Naive thymus-derived CD4-positive, alpha-beta T cell (primary cell): ENCODE measurements at regions of chr10 and their contacts with region 1.

Region 1: DNA sequence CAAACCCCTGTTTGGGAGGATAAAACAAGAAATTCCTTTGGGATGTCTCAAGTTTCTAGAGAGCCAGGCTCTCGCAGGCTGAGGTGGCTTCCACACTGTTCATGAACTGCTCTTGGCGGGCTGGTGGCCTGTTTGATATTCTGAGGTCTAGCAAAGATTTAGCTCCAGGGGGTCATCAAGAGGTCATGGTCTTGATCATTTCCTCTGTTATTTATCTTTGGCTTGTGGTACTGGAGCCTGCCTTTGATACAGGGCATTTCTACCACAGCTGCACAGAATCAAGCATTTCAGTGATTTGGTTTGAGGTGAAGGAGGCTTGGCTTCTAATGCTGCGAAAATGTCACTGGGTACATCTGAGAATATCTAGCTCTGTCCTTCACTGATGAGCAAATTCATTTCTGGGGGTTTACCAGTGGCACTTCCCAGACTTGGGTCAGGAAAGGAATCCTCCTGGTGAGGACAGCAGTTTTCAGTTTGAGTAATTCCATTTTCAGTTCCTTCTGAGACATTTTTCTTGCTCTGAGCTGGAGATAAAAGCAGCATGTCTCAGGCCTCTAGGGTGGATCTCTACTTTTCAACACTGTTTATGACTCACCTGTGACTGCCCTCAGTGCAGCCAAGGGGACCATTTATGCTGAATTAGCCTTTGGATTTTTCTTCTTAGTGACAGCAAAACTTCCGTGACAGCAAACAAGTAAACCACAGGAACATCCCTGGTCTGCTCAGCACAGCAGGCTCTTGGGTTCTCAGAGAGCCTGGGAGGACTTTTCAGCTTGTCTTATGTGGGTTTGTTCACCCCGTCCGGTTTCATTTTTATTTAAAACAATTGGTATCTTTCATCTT is 312.0 kb downstream of the RNLS start:
- DNase-seq: peak in 7 of 9 donors; percentile 8 to 54 (median 26)
- ATAC-seq: peak; percentile 79
- H3K4me3 ChIP-seq: peak overlapping the region; percentile 12
- H3K4me3 Mint-ChIP-seq: peak overlapping the region; percentile 29 to 78 (median 66)
- H3K27ac ChIP-seq: peak overlapping the region; percentile 33
- H3K27ac Mint-ChIP-seq: peak overlapping the region; percentile 44 to 89 (median 83)
- H3K4me1 ChIP-seq: peaks cover 13 to 18% of the 10 kb centered on the region in 2 donors
- H3K4me1 Mint-ChIP-seq: peaks cover 23 to 65% (median 38%) of the 10 kb centered on the region in 7 donors
- H3K27me3 ChIP-seq: no peaks in the 10 kb centered on the region
- H3K27me3 Mint-ChIP-seq: peaks cover 0 to 8% (median 0%) of the 10 kb centered on the region in 5 donors

Region 2: GRCh38 chr10:88194041-88194887 is 76.8 kb before region 1 on chr10:
- CTCF ChIA-PET with region 1: no interaction called
- POLR2A ChIA-PET with region 1: no interaction called
- intact Hi-C with region 1: loop called (anchors 1 to 2 kb)
- DNase-seq: peak in 8 of 9 donors; percentile 24 to 83 (median 72)
- ATAC-seq: peak; percentile 98
- H3K4me3 ChIP-seq: peak overlapping the region; percentile 9
- H3K4me3 Mint-ChIP-seq: peak overlapping the region; percentile 61 to 80 (median 72)
- H3K27ac ChIP-seq: peak overlapping the region; percentile 53
- H3K27ac Mint-ChIP-seq: peak overlapping the region; percentile 72 to 94 (median 89)
- H3K4me1 ChIP-seq: peaks cover 32% of the 10 kb centered on the region in 2 donors
- H3K4me1 Mint-ChIP-seq: peaks cover 21 to 71% (median 52%) of the 10 kb centered on the region in 7 donors
- H3K27me3 ChIP-seq: no peaks in the 10 kb centered on the region
- H3K27me3 Mint-ChIP-seq: peaks cover 0 to 2% (median 0%) of the 10 kb centered on the region in 5 donors

Region 3: GRCh38 chr10:88260329-88261051 is 10.6 kb before region 1 on chr10:
- CTCF ChIA-PET with region 1: no interaction called
- POLR2A ChIA-PET with region 1: no interaction called
- intact Hi-C with region 1: loop called in 1 of 2 experiments (anchors 1 kb)
- DNase-seq: no peak
- ATAC-seq: no peak
- H3K4me3 ChIP-seq: no peak overlapping the region
- H3K4me3 Mint-ChIP-seq: no peak overlapping the region
- H3K27ac ChIP-seq: no peak overlapping the region
- H3K27ac Mint-ChIP-seq: no peak overlapping the region
- H3K4me1 ChIP-seq: no peaks in the 10 kb centered on the region
- H3K4me1 Mint-ChIP-seq: peaks cover 0 to 10% (median 0%) of the 10 kb centered on the region in 7 donors
- H3K27me3 ChIP-seq: no peaks in the 10 kb centered on the region
- H3K27me3 Mint-ChIP-seq: peaks cover 0 to 15% (median 0%) of the 10 kb centered on the region in 5 donors

Region 4: DNA sequence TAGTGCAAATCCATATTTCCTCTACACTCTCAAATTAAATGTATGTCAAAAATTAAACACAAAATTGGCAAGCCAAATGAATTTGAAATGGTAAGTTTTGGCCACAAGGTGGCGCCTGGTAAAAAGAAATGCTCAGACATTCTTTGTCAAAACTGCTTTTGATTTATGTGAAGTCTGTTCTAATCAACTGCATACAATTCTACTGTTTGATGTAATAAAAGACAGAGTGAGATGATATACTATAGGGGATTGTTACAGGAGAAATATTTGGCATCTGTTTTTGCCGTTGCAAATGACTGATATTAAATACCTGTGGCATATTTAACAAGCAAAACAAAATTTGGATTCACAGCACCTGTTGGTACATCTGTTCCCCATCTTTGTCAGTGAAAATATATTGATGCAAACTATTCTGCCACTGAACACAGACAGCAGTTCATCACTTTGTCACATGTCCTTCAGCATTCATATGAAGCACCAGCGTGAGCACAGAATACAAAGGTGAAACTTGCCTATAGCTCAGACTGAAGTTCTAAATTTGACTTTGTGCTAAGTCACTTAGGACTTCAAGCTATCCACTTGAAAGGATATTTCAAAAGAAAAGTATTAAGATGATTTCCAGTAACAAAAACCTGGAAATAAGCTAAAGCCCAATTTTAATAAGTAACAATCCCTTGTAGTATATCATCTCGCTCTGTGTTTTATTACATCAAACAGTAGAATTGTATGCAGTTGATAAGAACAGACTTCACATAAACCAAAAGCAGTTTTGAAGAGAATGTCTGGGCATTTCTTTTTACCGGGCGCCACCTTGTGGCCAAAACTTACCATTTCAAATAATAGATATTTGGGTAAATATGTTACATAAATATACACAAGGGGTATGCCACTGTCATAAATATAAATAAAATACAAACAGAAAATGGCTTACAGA is 946.2 kb after region 1 on chr10:
- CTCF ChIA-PET with region 1: no interaction called
- POLR2A ChIA-PET with region 1: no interaction called
- intact Hi-C with region 1: no loop called
- DNase-seq: peak; percentile 17 to 66 (median 56)
- ATAC-seq: peak; percentile 75
- H3K4me3 ChIP-seq: no peak overlapping the region
- H3K4me3 Mint-ChIP-seq: peak overlapping the region in 5 of 10 donors; percentile 0 to 69 (median 3)
- H3K27ac ChIP-seq: no peak overlapping the region
- H3K27ac Mint-ChIP-seq: peak overlapping the region in 7 of 9 donors; percentile 2 to 79 (median 25)
- H3K4me1 ChIP-seq: peaks cover 0 to 6% of the 10 kb centered on the region in 2 donors
- H3K4me1 Mint-ChIP-seq: peaks cover 8 to 15% (median 10%) of the 10 kb centered on the region in 7 donors
- H3K27me3 ChIP-seq: no peaks in the 10 kb centered on the region
- H3K27me3 Mint-ChIP-seq: peaks cover 0 to 3% (median 0%) of the 10 kb centered on the region in 5 donors